CD8-positive, alpha-beta T cell (primary cell): ENCODE measurements at regions of chr12 and their contacts with region 1.

Region 1: GRCh38 chr12:81300454-81300853 is 222.6 kb downstream of the ACSS3 start:
- DNase-seq: no peak
- ATAC-seq: no peak
- H3K4me3 ChIP-seq: no peak overlapping the region
- H3K4me3 Mint-ChIP-seq: no peak overlapping the region
- H3K27ac ChIP-seq: no peak overlapping the region
- H3K27ac Mint-ChIP-seq: no peak overlapping the region
- H3K4me1 ChIP-seq: no peaks in the 10 kb centered on the region
- H3K4me1 Mint-ChIP-seq: no peaks in the 10 kb centered on the region
- H3K27me3 ChIP-seq: no peaks in the 10 kb centered on the region
- H3K27me3 Mint-ChIP-seq: no peaks in the 10 kb centered on the region
- CTCF ChIP-seq: no peak

Region 2: DNA sequence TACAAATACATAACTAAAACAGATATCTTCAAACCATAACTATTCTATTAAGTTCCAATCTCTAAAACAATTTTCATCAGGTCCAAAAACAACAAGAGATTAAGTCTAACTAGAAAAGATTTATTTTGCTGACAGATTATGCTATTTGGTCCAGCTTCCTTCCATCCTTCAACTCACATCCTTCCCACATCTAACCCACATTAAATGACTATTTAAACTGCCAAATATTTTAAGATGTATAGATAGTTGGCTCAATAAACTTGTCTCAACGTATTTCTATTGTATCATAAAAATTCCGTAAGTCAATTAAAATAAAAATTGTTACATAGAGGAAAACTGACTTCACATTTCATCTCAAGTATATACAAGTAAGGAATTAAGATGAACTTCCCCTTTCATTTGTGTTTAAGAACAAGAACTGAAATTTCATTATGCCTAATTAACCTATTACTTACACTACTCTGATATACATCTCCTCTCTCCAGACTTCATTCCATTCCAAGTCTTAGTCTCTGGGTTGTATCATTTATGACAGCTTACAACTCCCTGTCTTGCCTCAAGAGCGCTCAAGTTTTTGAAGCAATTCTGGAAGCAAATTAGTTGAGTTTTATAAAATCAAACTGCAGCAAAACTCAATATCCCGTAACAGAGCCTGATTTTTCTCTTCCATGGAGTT is 1635.1 kb before region 1 on chr12:
- CTCF ChIA-PET with region 1: no interaction called
- POLR2A ChIA-PET with region 1: no interaction called
- intact Hi-C with region 1: loop called in 1 of 2 experiments (anchors 5 kb)
- DNase-seq: no peak
- ATAC-seq: no peak
- H3K4me3 ChIP-seq: no peak overlapping the region
- H3K4me3 Mint-ChIP-seq: no peak overlapping the region
- H3K27ac ChIP-seq: no peak overlapping the region
- H3K27ac Mint-ChIP-seq: no peak overlapping the region
- H3K4me1 ChIP-seq: no peaks in the 10 kb centered on the region
- H3K4me1 Mint-ChIP-seq: no peaks in the 10 kb centered on the region
- H3K27me3 ChIP-seq: no peaks in the 10 kb centered on the region
- H3K27me3 Mint-ChIP-seq: peaks cover under 1% of the 10 kb centered on the region
- CTCF ChIP-seq: no peak

Region 3: GRCh38 chr12:81350309-81350708 is 49.9 kb after region 1 on chr12:
- CTCF ChIA-PET with region 1: no interaction called
- POLR2A ChIA-PET with region 1: no interaction called
- intact Hi-C with region 1: loop called in 1 of 2 experiments (anchors 5 kb)
- DNase-seq: no peak
- ATAC-seq: no peak
- H3K4me3 ChIP-seq: no peak overlapping the region
- H3K4me3 Mint-ChIP-seq: no peak overlapping the region
- H3K27ac ChIP-seq: no peak overlapping the region
- H3K27ac Mint-ChIP-seq: no peak overlapping the region
- H3K4me1 ChIP-seq: no peaks in the 10 kb centered on the region
- H3K4me1 Mint-ChIP-seq: no peaks in the 10 kb centered on the region
- H3K27me3 ChIP-seq: no peaks in the 10 kb centered on the region
- H3K27me3 Mint-ChIP-seq: no peaks in the 10 kb centered on the region
- CTCF ChIP-seq: no peak

Region 4: DNA sequence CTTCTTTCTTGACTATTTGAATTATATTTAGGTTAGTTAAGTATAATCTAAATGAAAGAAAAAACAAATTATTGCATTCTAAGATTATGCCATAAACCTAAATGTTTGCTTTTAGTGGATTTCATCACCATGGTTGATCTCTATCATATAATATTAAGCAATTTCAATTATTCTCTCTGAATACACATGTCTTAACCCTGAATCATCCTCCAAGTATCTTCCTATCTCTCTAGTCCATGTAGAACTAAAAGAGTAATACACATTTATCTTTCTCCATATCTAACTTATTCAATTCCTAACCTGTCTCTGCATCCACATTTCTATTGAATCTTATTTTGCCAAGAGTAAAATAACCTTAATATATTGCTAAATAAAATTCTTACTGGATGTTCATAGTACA is 399.1 kb after region 1 on chr12:
- CTCF ChIA-PET with region 1: no interaction called
- POLR2A ChIA-PET with region 1: no interaction called
- intact Hi-C with region 1: no loop called
- DNase-seq: no peak
- ATAC-seq: no peak
- H3K4me3 ChIP-seq: no peak overlapping the region
- H3K4me3 Mint-ChIP-seq: no peak overlapping the region
- H3K27ac ChIP-seq: no peak overlapping the region
- H3K27ac Mint-ChIP-seq: no peak overlapping the region
- H3K4me1 ChIP-seq: no peaks in the 10 kb centered on the region
- H3K4me1 Mint-ChIP-seq: no peaks in the 10 kb centered on the region
- H3K27me3 ChIP-seq: no peaks in the 10 kb centered on the region
- H3K27me3 Mint-ChIP-seq: peaks cover 4% of the 10 kb centered on the region
- CTCF ChIP-seq: no peak